IMR-90 (cell line): ENCODE measurements at regions of chr3 and their contacts with region 1.

Region 1: GRCh38 chr3:127814325-127814781 is 8.0 kb downstream of the MGLL start:
- DNase-seq: no peak
- ATAC-seq: no peak
- H3K4me3 ChIP-seq: no peak overlapping the region
- H3K27ac ChIP-seq: no peak overlapping the region
- H3K4me1 ChIP-seq: peaks cover 19% of the 10 kb centered on the region
- H3K27me3 ChIP-seq: no peaks in the 10 kb centered on the region
- CTCF ChIP-seq: no peak
- POLR2A ChIP-seq: no peak
- RAD21 ChIP-seq: no peak

Region 2: GRCh38 chr3:127780536-127781395 is 33.6 kb before region 1 on chr3:
- CTCF ChIA-PET with region 1: no interaction called
- POLR2A ChIA-PET with region 1: interaction called, 11 read pairs
- dilution Hi-C with region 1: no loop called
- in situ Hi-C with region 1: no loop called
- intact Hi-C with region 1: no loop called
- DNase-seq: no peak
- ATAC-seq: no peak
- H3K4me3 ChIP-seq: no peak overlapping the region
- H3K27ac ChIP-seq: peak overlapping the region; percentile 43
- H3K4me1 ChIP-seq: peaks cover 37% of the 10 kb centered on the region
- H3K27me3 ChIP-seq: no peaks in the 10 kb centered on the region
- CTCF ChIP-seq: no peak
- POLR2A ChIP-seq: no peak
- RAD21 ChIP-seq: no peak